HepG2 (cell line): ENCODE measurements at regions of chr6 and their contacts with region 1.

Region 1: GRCh38 chr6:130307752-130308361 is 58.0 kb upstream of the TMEM200A start:
- DNase-seq: peak; percentile 61
- ATAC-seq: peak; percentile 85
- H3K4me3 ChIP-seq: no peak overlapping the region
- H3K27ac ChIP-seq: no peak overlapping the region
- H3K4me1 ChIP-seq: peaks cover 7% of the 10 kb centered on the region
- H3K27me3 ChIP-seq: no peaks in the 10 kb centered on the region
- CTCF ChIP-seq: no peak
- EP300 ChIP-seq: no peak
- POLR2A ChIP-seq: no peak
- RAD21 ChIP-seq: no peak

Region 2: DNA sequence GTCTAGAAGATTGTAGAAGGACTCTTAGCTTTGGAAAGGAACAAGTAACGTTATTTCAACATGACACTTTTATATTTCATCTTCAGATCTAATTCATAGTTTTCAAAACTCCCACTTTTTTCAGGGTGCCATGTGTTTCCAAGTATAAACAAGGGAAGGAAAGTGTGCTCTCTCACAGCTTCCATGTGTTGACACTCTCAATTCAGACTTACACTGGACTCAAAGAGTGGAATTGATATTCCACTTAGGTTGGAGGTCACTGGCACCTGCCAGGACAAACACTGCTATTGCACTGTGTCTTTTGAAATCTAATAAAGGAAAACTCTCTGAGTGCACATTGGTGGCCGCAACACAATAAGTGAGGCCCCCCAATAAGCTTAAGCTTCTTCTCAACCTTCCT is 62.6 kb before region 1 on chr6:
- CTCF ChIA-PET with region 1: no interaction called
- POLR2A ChIA-PET with region 1: no interaction called
- in situ Hi-C with region 1: no loop called
- intact Hi-C with region 1: loop called (anchors 2 kb)
- DNase-seq: no peak
- ATAC-seq: no peak
- H3K4me3 ChIP-seq: no peak overlapping the region
- H3K27ac ChIP-seq: no peak overlapping the region
- H3K4me1 ChIP-seq: no peaks in the 10 kb centered on the region
- H3K27me3 ChIP-seq: no peaks in the 10 kb centered on the region
- CTCF ChIP-seq: no peak
- EP300 ChIP-seq: no peak
- POLR2A ChIP-seq: no peak
- RAD21 ChIP-seq: no peak